CD4-positive, alpha-beta memory T cell (primary cell): ENCODE measurements at regions of chr16 and their contacts with region 1.

Region 1: GRCh38 chr16:106623-107324 is 28.7 kb downstream of the MPG start:
- DNase-seq: peak in 4 of 5 donors; percentile 61 to 70 (median 66)
- H3K4me3 ChIP-seq: no peak overlapping the region
- H3K4me3 Mint-ChIP-seq: no peak overlapping the region
- H3K27ac ChIP-seq: no peak overlapping the region
- H3K27ac Mint-ChIP-seq: peak overlapping the region in 2 of 7 donors; percentile 11 to 29
- H3K4me1 ChIP-seq: peaks cover 4% of the 10 kb centered on the region
- H3K4me1 Mint-ChIP-seq: peaks cover 1 to 6% (median 4%) of the 10 kb centered on the region in 4 donors
- H3K27me3 ChIP-seq: no peaks in the 10 kb centered on the region
- H3K27me3 Mint-ChIP-seq: no peaks in the 10 kb centered on the region

Region 2: GRCh38 chr16:117379-118365 is 10.9 kb after region 1 on chr16:
- CTCF ChIA-PET with region 1: interaction called, 37 read pairs
- POLR2A ChIA-PET with region 1: no interaction called
- intact Hi-C with region 1: no loop called
- DNase-seq: peak; percentile 54 to 67 (median 60)
- H3K4me3 ChIP-seq: no peak overlapping the region
- H3K4me3 Mint-ChIP-seq: no peak overlapping the region
- H3K27ac ChIP-seq: no peak overlapping the region
- H3K27ac Mint-ChIP-seq: no peak overlapping the region
- H3K4me1 ChIP-seq: no peaks in the 10 kb centered on the region
- H3K4me1 Mint-ChIP-seq: peaks cover 0 to 5% (median 1%) of the 10 kb centered on the region in 4 donors
- H3K27me3 ChIP-seq: no peaks in the 10 kb centered on the region
- H3K27me3 Mint-ChIP-seq: no peaks in the 10 kb centered on the region